ENCODE measurements at regions of chr22 and their contacts with region 1.

Region 1: GRCh38 chr22:42533638-42533977 is 14.0 kb upstream of the RRP7A start:
- DNase-seq: no peak
- ATAC-seq: no peak
- H3K4me3 Mint-ChIP-seq: no peak overlapping the region
- H3K27ac Mint-ChIP-seq: no peak overlapping the region
- H3K4me1 Mint-ChIP-seq: peaks cover 4% of the 10 kb centered on the region; the same call in 1 of the 2 replicates
- H3K27me3 Mint-ChIP-seq: peaks cover 62% of the 10 kb centered on the region
- CTCF ChIP-seq: no peak

Region 2: GRCh38 chr22:42553475-42554361 is 20.1 kb after region 1 on chr22 and contains the start of gene SERHL2:
- CTCF ChIA-PET with region 1: interaction called, 10 read pairs
- POLR2A ChIA-PET with region 1: no interaction called
- DNase-seq: peak; percentile 97
- ATAC-seq: peak; percentile 97
- H3K4me3 Mint-ChIP-seq: peak within 1 kb of the TSS; percentile 85
- H3K27ac Mint-ChIP-seq: no peak within 1 kb of the TSS
- H3K4me1 Mint-ChIP-seq: peaks cover 20% of the 10 kb centered on the region
- H3K27me3 Mint-ChIP-seq: peaks cover 52% of the 10 kb centered on the region
- CTCF ChIP-seq: no peak
- total RNA-seq, gene SERHL2: 0.37 to 1.1 TPM (median 0.92 TPM) in 3 replicates

Region 3: DNA sequence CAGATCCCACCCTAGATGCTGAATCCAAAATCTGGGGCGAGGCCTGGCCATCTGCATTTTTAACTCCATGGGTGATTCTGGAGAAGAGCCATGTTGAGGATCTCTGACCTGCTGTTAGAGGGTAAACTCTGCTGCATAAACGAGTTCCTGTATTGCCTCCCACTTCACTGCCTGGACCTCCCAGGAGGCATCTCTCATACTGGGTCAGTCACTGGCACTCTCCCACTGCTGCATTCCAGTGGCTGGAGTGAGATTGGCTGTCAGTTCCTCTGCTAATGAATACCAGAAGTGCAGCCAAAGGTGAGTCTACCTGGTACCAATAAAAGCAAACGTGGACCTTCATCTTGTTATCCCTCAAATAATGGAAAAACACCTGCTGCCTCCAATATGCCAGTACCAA is 70.8 kb after region 1 on chr22:
- CTCF ChIA-PET with region 1: no interaction called
- POLR2A ChIA-PET with region 1: no interaction called
- DNase-seq: no peak
- ATAC-seq: no peak
- H3K4me3 Mint-ChIP-seq: no peak overlapping the region
- H3K27ac Mint-ChIP-seq: no peak overlapping the region; the same call in 1 of the 2 replicates
- H3K4me1 Mint-ChIP-seq: peaks cover 10% of the 10 kb centered on the region
- H3K27me3 Mint-ChIP-seq: no peaks in the 10 kb centered on the region
- CTCF ChIP-seq: no peak